ENCODE measurements at regions of chr9 and their contacts with region 1.

Region 1: GRCh38 chr9:109817846-109818472 is 38.0 kb downstream of the PALM2AKAP2 start:
- DNase-seq: peak in 1 of 2 donors; percentile 93
- H3K4me3 ChIP-seq: no peak overlapping the region
- H3K27ac ChIP-seq: peak overlapping the region; percentile 79 to 85
- H3K4me1 ChIP-seq: peaks cover 9 to 23% of the 10 kb centered on the region in 2 donors
- H3K27me3 ChIP-seq: no peaks in the 10 kb centered on the region
- CTCF ChIP-seq: peak; percentile 82 to 96 (median 83)

Region 2: DNA sequence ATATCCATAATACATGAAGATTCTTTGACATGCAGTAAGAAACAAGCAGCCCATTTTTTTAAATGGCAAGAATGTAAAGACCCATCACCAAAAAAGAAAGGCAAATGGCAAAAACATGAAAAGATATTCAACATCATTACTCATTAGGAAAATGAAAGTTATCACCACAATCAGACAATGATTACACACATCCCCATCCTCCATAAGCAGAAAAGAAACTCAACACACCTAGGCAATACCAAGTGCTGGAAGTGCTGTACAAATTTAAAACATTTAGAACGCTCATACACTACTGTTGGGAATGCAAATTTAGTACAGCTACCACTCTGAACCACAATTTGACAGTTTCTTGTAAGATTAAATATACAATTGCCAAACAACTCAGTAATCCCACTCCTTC is 1428.9 kb before region 1 on chr9:
- intact Hi-C with region 1: no loop called
- DNase-seq: no peak
- H3K4me3 ChIP-seq: no peak overlapping the region
- H3K27ac ChIP-seq: no peak overlapping the region
- H3K4me1 ChIP-seq: no peaks in the 10 kb centered on the region
- H3K27me3 ChIP-seq: no peaks in the 10 kb centered on the region
- CTCF ChIP-seq: no peak

Region 3: DNA sequence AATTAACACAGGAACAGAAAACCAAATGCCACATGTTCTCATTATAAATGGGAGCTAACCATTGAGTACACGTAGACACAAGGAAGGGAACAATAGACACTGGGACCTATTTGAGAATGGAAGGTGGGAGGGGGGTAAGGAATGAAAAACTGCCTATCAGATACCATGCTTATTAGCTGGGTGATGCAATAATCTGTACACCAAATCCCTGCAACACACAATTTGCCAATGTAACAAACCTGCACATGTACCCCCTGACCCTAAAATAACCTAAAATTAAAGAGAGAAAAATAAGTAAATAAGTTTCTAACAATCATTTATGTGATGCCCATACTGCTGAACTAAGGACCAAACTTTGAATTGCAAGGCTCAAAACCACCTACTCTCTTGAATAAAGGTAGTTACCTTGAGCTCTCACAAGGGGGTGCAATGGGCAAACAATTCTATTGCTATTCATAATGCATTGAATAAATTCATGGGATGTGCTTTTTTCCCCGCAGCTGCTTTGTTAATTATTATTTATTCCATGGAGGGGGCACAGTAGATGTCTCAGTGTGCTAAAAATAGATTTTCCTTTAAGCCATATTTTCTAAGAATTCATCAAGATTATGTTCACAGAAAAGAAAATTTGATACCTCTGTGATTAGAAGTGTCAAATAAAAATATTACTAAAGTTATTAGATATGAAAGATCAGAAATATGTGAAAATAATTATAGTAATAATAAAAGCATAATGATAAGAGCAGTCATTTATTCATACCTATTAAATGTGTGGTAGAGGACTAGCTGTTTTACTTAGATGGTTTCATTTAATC is 243.7 kb before region 1 on chr9:
- intact Hi-C with region 1: loop called (anchors 1 kb)
- DNase-seq: no peak
- H3K4me3 ChIP-seq: no peak overlapping the region
- H3K27ac ChIP-seq: no peak overlapping the region
- H3K4me1 ChIP-seq: no peaks in the 10 kb centered on the region
- H3K27me3 ChIP-seq: no peaks in the 10 kb centered on the region
- CTCF ChIP-seq: peak; percentile 64 to 79 (median 77)

Region 4: DNA sequence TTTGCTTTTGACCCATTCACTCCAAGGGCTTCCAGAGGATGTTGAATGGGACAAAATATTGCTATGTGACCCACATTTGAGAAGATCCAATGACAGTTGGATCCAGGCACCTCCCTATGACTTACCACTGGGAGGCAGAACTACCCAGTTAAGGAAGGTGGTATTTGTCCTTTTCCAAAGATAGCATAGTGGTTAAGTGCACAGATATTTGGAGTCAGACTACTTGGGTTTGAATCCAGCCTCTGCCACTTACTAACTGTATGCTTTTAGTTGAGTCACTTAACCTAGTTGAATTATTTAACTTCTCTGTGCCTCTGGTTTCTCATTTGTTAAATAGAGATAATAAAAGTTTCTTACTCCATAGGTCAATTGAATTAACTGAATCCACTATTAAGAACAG is 112.4 kb before region 1 on chr9:
- intact Hi-C with region 1: loop called (anchors 1 kb)
- DNase-seq: no peak
- H3K4me3 ChIP-seq: no peak overlapping the region
- H3K27ac ChIP-seq: peak overlapping the region in 1 of 2 donors; percentile 55
- H3K4me1 ChIP-seq: peaks cover 15 to 27% of the 10 kb centered on the region in 2 donors
- H3K27me3 ChIP-seq: no peaks in the 10 kb centered on the region
- CTCF ChIP-seq: no peak

Region 5: GRCh38 chr9:109779711-109780452 is 38.1 kb before region 1 on chr9 and contains the start of gene PALM2AKAP2:
- intact Hi-C with region 1: loop called (anchors 1 kb)
- DNase-seq: peak in 1 of 2 donors; percentile 86
- H3K4me3 ChIP-seq: peak within 1 kb of the TSS; percentile 68 to 88
- H3K27ac ChIP-seq: peak within 1 kb of the TSS; percentile 86 to 88
- H3K4me1 ChIP-seq: peaks cover 3 to 12% of the 10 kb centered on the region in 2 donors
- H3K27me3 ChIP-seq: no peaks in the 10 kb centered on the region
- CTCF ChIP-seq: peak; percentile 6 to 62 (median 31)
- total RNA-seq, gene PALM2AKAP2: 38.2 TPM

Region 6: GRCh38 chr9:110125207-110125751 is 307.3 kb after region 1 on chr9:
- intact Hi-C with region 1: loop called (anchors 5 kb)
- DNase-seq: peak; percentile 76 to 97
- H3K4me3 ChIP-seq: peak overlapping the region in 1 of 2 donors; percentile 63
- H3K27ac ChIP-seq: peak overlapping the region; percentile 91 to 92
- H3K4me1 ChIP-seq: peaks cover 23 to 59% of the 10 kb centered on the region in 2 donors
- H3K27me3 ChIP-seq: no peaks in the 10 kb centered on the region
- CTCF ChIP-seq: no peak

Region 7: DNA sequence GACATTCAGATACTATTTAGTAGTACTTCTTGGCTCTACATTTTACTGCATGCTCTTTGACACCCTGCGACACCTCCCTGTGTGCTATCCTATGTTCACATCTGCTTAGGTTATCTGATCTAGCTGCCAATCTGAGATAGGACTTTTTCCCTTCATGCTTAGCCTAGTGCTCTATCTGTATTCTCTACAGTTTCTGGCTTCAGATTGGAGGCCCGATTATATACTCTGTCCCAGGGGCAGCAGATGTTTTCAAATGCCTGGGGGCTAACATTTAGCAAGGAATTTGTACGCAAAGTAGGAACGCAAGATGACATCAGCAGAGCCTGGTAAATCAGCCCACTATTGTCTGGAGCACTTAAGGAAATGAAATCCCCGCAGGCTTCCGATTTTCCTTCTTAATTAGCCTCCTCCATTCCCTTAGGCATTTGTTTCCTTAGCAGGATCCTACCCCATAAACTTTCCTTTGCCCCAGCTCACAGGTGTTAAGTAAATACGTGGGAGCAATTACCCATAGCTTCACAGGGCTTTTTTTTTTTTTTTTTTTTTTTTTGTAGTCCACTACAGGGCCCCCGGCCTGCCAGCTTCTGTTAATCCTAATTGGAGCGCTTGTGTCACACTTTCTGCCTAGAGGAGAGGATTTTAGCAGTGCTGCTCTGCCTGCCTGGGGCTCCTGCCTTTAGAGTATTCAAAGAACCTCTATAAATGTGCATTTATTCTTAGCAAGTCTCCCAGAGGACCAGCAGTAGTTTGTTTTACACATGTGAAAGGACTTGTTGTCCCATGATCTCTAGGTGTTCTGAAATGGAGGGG is 1281.4 kb after region 1 on chr9:
- intact Hi-C with region 1: no loop called
- DNase-seq: no peak
- H3K4me3 ChIP-seq: no peak overlapping the region
- H3K27ac ChIP-seq: no peak overlapping the region
- H3K4me1 ChIP-seq: peaks cover 0 to 4% of the 10 kb centered on the region in 2 donors
- H3K27me3 ChIP-seq: no peaks in the 10 kb centered on the region
- CTCF ChIP-seq: no peak